ENCODE measurements at regions of chr17 and their contacts with region 1.

Region 1: GRCh38 chr17:16521070-16521727 is 29.2 kb upstream of the LRRC75A start:
- DNase-seq: peak; percentile 71
- H3K4me3 ChIP-seq: no peak overlapping the region
- H3K27ac ChIP-seq: no peak overlapping the region
- H3K4me1 ChIP-seq: peaks cover 20% of the 10 kb centered on the region
- H3K27me3 ChIP-seq: no peaks in the 10 kb centered on the region
- CTCF ChIP-seq: peak; percentile 90 to 93

Region 2: GRCh38 chr17:16363749-16364536 is 157.3 kb before region 1 on chr17:
- CTCF ChIA-PET with region 1: interaction called, 9 read pairs
- dilution Hi-C with region 1: no loop called
- in situ Hi-C with region 1: no loop called
- intact Hi-C with region 1: loop called (anchors 1 kb)
- DNase-seq: peak; percentile 55
- H3K4me3 ChIP-seq: no peak overlapping the region
- H3K27ac ChIP-seq: no peak overlapping the region
- H3K4me1 ChIP-seq: no peaks in the 10 kb centered on the region
- H3K27me3 ChIP-seq: no peaks in the 10 kb centered on the region
- CTCF ChIP-seq: peak; percentile 93 to 98

Region 3: GRCh38 chr17:16456742-16457316 is 64.4 kb before region 1 on chr17:
- CTCF ChIA-PET with region 1: interaction called, 9 read pairs
- dilution Hi-C with region 1: loop called (anchors 5 kb)
- in situ Hi-C with region 1: loop called (anchors 5 kb)
- intact Hi-C with region 1: loop called (anchors 1 kb)
- DNase-seq: no peak
- H3K4me3 ChIP-seq: no peak overlapping the region
- H3K27ac ChIP-seq: no peak overlapping the region
- H3K4me1 ChIP-seq: peaks cover 11% of the 10 kb centered on the region
- H3K27me3 ChIP-seq: no peaks in the 10 kb centered on the region
- CTCF ChIP-seq: no peak

Region 4: DNA sequence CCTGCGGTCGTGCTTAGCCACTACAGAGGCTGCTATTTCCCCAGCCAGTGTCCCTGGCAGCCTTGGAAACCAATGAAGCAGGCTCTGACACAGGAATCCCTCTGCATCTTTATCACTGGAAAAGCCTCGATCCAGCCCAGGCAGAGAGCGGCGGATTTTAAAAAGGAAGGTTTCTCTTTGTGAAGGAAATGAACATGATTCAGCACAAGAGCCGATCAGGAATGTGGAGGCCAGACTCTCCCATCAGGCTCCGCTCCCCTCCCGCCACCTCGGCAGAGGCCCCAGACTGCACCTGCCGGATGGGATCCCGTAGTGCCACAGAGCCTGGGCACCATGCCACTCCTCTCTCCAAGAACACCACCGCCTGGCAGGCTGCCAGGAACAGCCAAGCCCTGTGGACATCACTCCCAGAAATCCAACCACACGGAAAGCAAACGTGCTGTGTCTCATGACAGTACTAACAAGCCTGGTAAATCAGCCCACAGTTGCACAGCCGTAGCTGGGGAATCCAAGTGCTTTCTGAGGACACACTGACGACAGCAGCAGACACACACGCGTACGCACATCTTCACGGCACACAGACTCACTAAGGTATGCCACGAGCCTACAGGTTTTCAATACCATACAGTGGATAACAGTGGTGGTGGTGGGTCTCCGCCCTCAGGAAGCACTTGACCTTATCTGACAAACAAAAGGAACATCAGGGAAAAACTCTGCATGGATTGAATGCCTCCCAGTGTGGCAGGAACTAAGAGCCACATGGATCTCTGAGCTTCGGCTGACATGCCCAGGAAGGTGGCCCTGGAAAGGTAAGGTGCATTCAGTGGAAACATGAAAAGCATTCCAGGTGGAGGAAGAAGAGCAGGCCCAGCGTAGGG is 34.6 kb before region 1 on chr17:
- CTCF ChIA-PET with region 1: no interaction called
- dilution Hi-C with region 1: no loop called
- in situ Hi-C with region 1: no loop called
- intact Hi-C with region 1: loop called (anchors 1 kb)
- DNase-seq: peak; percentile 76
- H3K4me3 ChIP-seq: peak overlapping the region in 1 of 3 experiments; percentile 3
- H3K27ac ChIP-seq: no peak overlapping the region
- H3K4me1 ChIP-seq: peaks cover 16% of the 10 kb centered on the region
- H3K27me3 ChIP-seq: peaks cover 6% of the 10 kb centered on the region
- CTCF ChIP-seq: no peak

Region 5: GRCh38 chr17:16593356-16594102 is 72.3 kb after region 1 on chr17:
- CTCF ChIA-PET with region 1: no interaction called
- dilution Hi-C with region 1: no loop called
- in situ Hi-C with region 1: no loop called
- intact Hi-C with region 1: no loop called
- DNase-seq: peak; percentile 23
- H3K4me3 ChIP-seq: no peak overlapping the region
- H3K27ac ChIP-seq: no peak overlapping the region
- H3K4me1 ChIP-seq: peaks cover 4% of the 10 kb centered on the region
- H3K27me3 ChIP-seq: no peaks in the 10 kb centered on the region
- CTCF ChIP-seq: no peak

Measured in mammary epithelial cell (primary cell).